ENCODE measurements at regions of chr13 and their contacts with region 1.

Region 1: GRCh38 chr13:42969558-42970172 is 22.4 kb downstream of the EPSTI1 start:
- DNase-seq: no peak
- H3K4me3 ChIP-seq: no peak overlapping the region
- CTCF ChIP-seq: peak; percentile 78

Region 2: GRCh38 chr13:42345367-42345766 is 624.3 kb before region 1 on chr13:
- CTCF ChIA-PET with region 1: no interaction called
- POLR2A ChIA-PET with region 1: no interaction called
- DNase-seq: no peak
- H3K4me3 ChIP-seq: no peak overlapping the region
- CTCF ChIP-seq: no peak

Region 3: GRCh38 chr13:42594970-42595571 is 374.6 kb before region 1 on chr13:
- CTCF ChIA-PET with region 1: interaction called, 19 read pairs
- POLR2A ChIA-PET with region 1: no interaction called
- DNase-seq: no peak
- H3K4me3 ChIP-seq: no peak overlapping the region
- CTCF ChIP-seq: peak; percentile 60

Region 4: DNA sequence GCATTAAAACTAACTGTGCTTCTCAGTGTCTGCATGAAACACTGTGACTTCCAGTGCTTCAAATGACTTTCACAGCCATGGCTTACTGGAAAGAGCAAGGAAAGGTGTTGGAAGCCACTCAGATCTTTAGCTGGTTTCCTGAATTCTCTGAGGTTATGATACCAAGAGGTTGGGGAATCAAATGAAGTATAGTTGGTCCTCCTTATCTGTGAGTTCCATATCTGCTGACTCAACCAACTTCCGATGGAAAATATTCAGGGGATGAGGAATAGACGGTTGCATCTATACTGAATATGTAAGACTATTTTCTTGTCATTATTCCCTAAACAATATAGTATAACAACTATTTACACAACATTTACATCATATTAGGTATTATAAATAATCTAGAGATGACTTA is 10.1 kb before region 1 on chr13:
- CTCF ChIA-PET with region 1: interaction called, 27 read pairs
- POLR2A ChIA-PET with region 1: no interaction called
- DNase-seq: no peak
- H3K4me3 ChIP-seq: no peak overlapping the region
- CTCF ChIP-seq: no peak

Region 5: DNA sequence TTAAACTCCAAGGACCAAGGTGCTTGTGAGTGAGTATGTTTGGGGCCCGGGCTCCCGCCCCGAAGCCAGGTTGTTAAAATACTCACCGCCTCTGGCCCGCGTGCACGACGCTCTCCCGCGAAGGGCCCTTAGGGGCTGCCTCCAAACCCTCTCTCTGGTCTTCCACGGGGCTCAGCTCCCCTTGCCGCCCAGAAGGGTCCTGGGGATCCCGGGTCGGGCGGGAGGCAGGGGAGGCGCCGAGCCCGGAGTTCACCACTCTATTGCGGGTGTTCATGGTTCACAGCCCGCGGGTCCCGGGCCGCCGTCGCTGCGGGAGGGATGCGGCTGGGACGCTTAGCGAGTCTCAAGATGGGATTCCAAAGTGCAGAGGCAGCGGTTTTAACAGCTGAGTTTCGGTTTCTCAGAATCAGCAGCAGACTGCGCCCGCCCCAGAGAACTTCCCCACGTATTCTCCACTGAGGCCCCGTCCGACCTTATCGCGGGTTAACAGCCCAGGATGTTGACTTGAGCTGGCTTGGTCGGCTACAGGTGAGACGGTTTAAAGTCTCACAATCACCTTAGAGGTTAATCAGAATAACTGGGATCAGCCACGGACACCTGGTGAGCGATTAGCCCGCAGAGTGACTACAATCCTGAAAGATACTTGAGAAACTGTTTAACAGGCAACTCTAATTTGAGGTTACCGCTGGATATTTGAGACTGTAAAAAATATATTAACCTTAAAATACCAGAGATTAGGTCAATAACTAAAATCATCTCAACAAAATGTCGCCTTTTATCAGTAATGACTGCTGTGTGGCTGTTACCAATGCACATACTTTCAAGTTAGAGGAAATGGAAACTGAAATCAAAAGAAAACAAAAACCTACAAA is 22.5 kb after region 1 on chr13 and contains the start of gene EPSTI1:
- CTCF ChIA-PET with region 1: interaction called, 65 read pairs
- POLR2A ChIA-PET with region 1: no interaction called
- DNase-seq: no peak
- H3K4me3 ChIP-seq: peak within 1 kb of the TSS; percentile 58
- CTCF ChIP-seq: no peak

Region 6: DNA sequence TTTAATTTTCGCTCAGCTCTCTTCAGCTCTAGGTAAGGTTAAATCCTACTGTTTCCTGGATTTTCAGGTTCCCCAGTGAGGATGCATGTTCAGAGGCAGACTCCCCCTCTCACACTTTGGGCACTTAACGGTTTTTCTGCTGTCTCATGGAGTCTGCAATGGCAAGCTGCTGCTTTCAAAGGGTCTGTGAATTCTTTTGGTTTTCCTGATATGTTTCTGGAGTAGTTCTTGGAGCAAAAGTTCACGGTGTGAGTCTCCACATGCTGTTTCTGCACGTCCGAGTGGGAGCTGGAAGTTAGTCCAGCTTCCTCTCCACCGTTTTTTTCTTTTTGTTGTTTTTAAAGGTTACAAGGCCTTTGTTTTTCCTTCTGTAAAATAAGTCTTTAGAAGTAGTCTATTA is 89.2 kb after region 1 on chr13:
- CTCF ChIA-PET with region 1: interaction called, 11 read pairs
- POLR2A ChIA-PET with region 1: no interaction called
- DNase-seq: no peak
- H3K4me3 ChIP-seq: no peak overlapping the region
- CTCF ChIP-seq: no peak

Region 7: GRCh38 chr13:43473437-43473836 is 503.8 kb after region 1 on chr13:
- CTCF ChIA-PET with region 1: no interaction called
- POLR2A ChIA-PET with region 1: no interaction called
- DNase-seq: no peak
- H3K4me3 ChIP-seq: no peak overlapping the region
- CTCF ChIP-seq: no peak

Region 8: GRCh38 chr13:43804461-43805070 is 834.9 kb after region 1 on chr13:
- CTCF ChIA-PET with region 1: interaction called, 11 read pairs
- POLR2A ChIA-PET with region 1: no interaction called
- DNase-seq: no peak
- H3K4me3 ChIP-seq: peak overlapping the region; percentile 32
- CTCF ChIP-seq: peak; percentile 18

Measured in AG04449 (cell line).